K562 (cell line): ENCODE measurements at regions of chr13 and their contacts with region 1.

Region 1: DNA sequence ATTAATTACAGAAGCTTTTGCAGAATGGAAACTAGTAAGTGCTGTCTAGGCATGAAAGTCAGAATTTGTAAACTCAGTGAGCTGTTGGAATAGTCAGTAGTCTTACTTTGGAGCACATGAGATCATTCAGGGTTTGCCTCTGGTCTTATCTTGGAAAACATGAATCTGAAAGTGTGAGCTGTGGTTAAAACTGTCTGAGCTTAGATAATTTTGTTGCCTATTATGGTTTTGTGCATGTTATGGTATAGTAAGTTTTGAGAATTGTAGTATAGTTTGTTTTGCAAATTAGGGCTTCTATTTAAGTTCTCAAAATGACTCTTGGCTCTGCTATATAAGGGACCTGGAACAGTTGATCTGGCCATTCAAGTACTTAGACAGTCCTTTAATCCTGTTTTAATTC is 53.7 kb upstream of the TRPC4 start:
- DNase-seq: peak in 3 of 4 experiments; percentile 9 to 63 (median 35)
- ATAC-seq: peak; percentile 91
- H3K4me3 ChIP-seq: no peak overlapping the region
- H3K27ac ChIP-seq: no peak overlapping the region; the same call in 2 of the 3 replicates
- H3K4me1 ChIP-seq: peaks cover 4 to 12% of the 10 kb centered on the region in 2 experiments; a peak in 2 of 5 replicates
- H3K27me3 ChIP-seq: no peaks in the 10 kb centered on the region
- CTCF ChIP-seq: no peak
- EP300 ChIP-seq: peak; percentile 79
- POLR2A ChIP-seq: no peak
- RAD21 ChIP-seq: no peak

Region 2: GRCh38 chr13:36606060-36606459 is 1317.2 kb before region 1 on chr13:
- CTCF ChIA-PET with region 1: no interaction called
- POLR2A ChIA-PET with region 1: no interaction called
- in situ Hi-C with region 1: no loop called
- intact Hi-C with region 1: no loop called
- DNase-seq: no peak
- ATAC-seq: no peak
- H3K4me3 ChIP-seq: no peak overlapping the region
- H3K27ac ChIP-seq: no peak overlapping the region
- H3K4me1 ChIP-seq: no peaks in the 10 kb centered on the region
- H3K27me3 ChIP-seq: no peaks in the 10 kb centered on the region
- CTCF ChIP-seq: no peak
- EP300 ChIP-seq: no peak
- POLR2A ChIP-seq: no peak
- RAD21 ChIP-seq: no peak

Region 3: GRCh38 chr13:37956536-37956935 is 33.3 kb after region 1 on chr13:
- CTCF ChIA-PET with region 1: no interaction called
- POLR2A ChIA-PET with region 1: no interaction called
- in situ Hi-C with region 1: no loop called
- intact Hi-C with region 1: loop called (anchors 5 kb)
- DNase-seq: no peak
- ATAC-seq: no peak
- H3K4me3 ChIP-seq: no peak overlapping the region
- H3K27ac ChIP-seq: no peak overlapping the region
- H3K4me1 ChIP-seq: peaks cover 0 to 3% of the 10 kb centered on the region in 2 experiments; a peak in 2 of 5 replicates
- H3K27me3 ChIP-seq: no peaks in the 10 kb centered on the region
- CTCF ChIP-seq: no peak
- EP300 ChIP-seq: no peak
- POLR2A ChIP-seq: no peak
- RAD21 ChIP-seq: no peak

Region 4: DNA sequence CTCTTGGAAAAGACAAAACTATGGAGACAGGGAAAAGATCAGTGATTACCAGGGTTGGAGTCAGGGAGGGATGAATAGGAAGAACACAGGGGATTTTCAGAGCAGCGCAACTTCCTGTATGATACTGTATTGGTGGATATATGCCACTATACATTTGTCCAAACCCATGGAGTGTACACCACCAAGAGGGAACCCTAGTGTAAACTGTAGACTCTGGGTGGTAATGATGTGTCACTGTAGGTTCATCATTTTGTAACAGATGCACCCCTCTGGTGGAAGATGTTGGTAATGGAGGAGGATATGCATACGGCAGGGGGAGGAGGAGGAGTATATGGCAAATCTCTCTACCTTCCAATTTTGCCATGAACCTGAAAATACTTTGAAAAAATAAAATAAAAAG is 494.5 kb after region 1 on chr13:
- CTCF ChIA-PET with region 1: no interaction called
- POLR2A ChIA-PET with region 1: no interaction called
- in situ Hi-C with region 1: no loop called
- intact Hi-C with region 1: no loop called
- DNase-seq: peak; percentile 12 to 30 (median 20)
- ATAC-seq: peak; percentile 91
- H3K4me3 ChIP-seq: no peak overlapping the region
- H3K27ac ChIP-seq: no peak overlapping the region
- H3K4me1 ChIP-seq: no peaks in the 10 kb centered on the region
- H3K27me3 ChIP-seq: no peaks in the 10 kb centered on the region
- CTCF ChIP-seq: peak; percentile 40 to 50 (median 43); a peak in 3 of 6 replicates
- EP300 ChIP-seq: no peak
- POLR2A ChIP-seq: no peak
- RAD21 ChIP-seq: peak; percentile 24 to 50; a peak in 2 of 4 replicates